Right cardiac atrium (tissue), 5 donors: ENCODE measurements at regions of chr1 and their contacts with region 1.

Region 1: DNA sequence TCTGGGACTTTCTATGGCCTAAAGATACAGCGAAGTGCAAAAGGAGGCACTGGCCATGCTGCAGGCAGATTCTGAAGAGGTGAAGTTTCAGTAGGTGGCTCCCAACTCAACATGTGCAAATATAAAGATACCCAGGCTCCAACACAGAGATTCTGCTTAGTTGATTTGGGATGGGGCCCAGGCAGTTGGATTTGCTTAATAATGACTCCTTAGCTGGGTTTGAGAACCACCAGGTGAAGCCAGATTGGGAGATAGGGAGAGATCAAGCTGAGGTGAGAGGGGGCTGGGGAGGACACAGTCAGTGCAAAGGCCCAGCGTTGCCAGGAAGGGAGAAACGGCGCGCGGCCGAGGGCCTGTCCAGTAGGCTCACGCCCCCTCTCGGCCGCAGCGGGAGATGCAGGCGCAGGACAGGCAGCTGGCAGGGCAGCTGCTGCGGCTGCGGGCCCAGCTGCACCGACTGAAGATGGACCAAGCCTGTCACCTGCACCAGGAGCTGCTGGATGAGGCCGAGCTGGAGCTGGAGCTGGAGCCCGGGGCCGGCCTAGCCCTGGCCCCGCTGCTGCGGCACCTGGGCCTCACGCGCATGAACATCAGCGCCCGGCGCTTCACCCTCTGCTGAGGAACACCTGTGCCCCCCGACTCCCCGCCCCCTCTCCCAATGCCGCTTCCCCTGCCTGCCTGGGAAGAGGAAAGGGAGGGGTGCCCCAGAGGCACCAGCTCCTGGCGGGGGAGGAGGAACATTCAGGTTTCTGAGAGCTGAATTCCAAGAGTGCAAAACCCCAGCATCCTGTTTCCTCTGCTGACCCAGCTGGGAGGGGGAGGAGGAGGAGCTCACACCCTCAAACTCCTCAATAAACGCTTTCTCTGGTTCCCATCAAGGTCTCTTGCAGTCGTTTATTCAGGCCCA is 1.2 kb downstream of the FAM167B start:
- DNase-seq: peak; percentile 87 to 96 (median 94)
- ATAC-seq: peak; percentile 56 to 62
- H3K4me3 ChIP-seq: no peak overlapping the region
- H3K27ac ChIP-seq: peak overlapping the region; percentile 80
- H3K4me1 ChIP-seq: peaks cover 6% of the 10 kb centered on the region
- H3K27me3 ChIP-seq: no peaks in the 10 kb centered on the region

Region 2: DNA sequence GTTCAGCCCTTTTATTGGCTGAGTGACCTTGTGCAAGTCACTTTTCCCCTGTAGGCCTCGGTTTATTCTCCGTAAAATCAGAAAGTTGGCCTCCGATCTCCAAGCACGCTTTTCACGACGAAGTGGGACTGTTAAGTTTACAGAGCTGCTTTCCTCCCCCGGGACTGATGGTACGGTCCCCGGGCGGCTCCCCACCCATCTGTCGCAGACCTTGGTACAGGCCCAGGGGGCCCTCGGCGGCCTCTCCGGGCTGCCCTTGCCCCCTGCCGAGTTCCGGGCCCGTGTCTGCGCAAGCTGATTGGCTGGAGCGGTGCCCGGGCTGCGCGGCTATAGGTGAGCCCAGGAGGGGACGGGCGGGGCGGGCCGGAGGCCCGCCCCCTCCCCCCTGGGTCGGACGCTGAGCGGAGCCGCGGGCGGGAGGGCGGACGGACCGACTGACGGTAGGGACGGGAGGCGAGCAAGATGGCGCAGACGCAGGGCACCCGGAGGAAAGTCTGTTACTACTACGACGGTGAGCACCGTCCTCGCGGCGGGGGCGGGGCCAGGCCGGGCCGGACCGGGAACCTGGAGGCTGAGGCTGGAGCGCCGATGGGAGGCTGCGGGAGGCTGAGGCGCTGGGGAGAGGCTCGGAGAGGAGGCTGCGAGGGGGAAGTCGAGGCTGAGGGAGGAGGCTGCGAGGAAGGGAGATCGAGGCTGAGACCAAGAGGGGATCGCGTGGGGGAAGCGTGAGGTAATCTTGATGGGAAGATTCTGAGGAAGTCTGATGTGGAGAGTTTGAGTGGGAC is 43.7 kb after region 1 on chr1 and contains the start of gene HDAC1:
- intact Hi-C with region 1: loop called in 1 of 4 experiments (anchors 10 kb)
- DNase-seq: peak; percentile 96 to 99 (median 99)
- ATAC-seq: peak; percentile 98 to 99
- H3K4me3 ChIP-seq: peak within 1 kb of the TSS; percentile 85
- H3K27ac ChIP-seq: peak within 1 kb of the TSS; percentile 43
- H3K4me1 ChIP-seq: no peaks in the 10 kb centered on the region
- H3K27me3 ChIP-seq: no peaks in the 10 kb centered on the region
- total RNA-seq, gene HDAC1: 34.1 to 44.9 (median 39.5) TPM